Activated B cell treated with CpG ODN at 0.5 μM for 24 hours (primary cell): ENCODE measurements at regions of chr3 and their contacts with region 1.

Region 1: GRCh38 chr3:45593708-45594609 is 592 bp upstream of the LIMD1 start:
- DNase-seq: peak; percentile 80
- ATAC-seq: peak; percentile 69
- H3K4me3 Mint-ChIP-seq: peak overlapping the region; percentile 83
- H3K27ac Mint-ChIP-seq: peak overlapping the region; percentile 92
- H3K4me1 Mint-ChIP-seq: peaks cover 58% of the 10 kb centered on the region
- H3K27me3 Mint-ChIP-seq: no peaks in the 10 kb centered on the region
- CTCF ChIP-seq: no peak

Region 2: DNA sequence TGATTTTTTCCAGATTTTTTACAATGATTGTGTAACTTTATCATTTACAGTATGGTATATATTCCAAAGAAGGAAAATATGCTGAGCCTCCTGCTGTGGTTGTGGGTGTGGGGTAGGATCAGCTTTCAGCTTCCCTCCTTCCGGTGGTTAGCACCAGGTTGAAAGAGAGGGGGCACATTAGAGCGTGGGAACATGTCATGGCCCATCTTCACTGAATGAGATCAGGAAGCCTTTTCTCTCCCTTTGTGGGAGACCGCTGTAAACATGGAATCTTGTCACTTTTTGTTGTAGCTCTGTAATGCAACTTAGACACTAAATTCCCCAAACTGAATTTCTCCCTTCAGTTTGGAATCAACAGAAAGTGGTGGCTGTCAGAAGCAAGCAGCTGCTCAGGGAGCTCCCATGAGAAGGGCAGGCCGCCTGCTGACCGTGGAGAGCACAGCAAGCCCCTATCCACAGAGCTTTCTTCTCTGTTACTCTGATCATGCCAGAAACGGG is 86.1 kb before region 1 on chr3:
- CTCF ChIA-PET with region 1: interaction called, 4 read pairs
- POLR2A ChIA-PET with region 1: no interaction called
- intact Hi-C with region 1: loop called (anchors 2 kb)
- DNase-seq: no peak
- ATAC-seq: no peak
- H3K4me3 Mint-ChIP-seq: no peak overlapping the region
- H3K27ac Mint-ChIP-seq: no peak overlapping the region
- H3K4me1 Mint-ChIP-seq: no peaks in the 10 kb centered on the region
- H3K27me3 Mint-ChIP-seq: no peaks in the 10 kb centered on the region
- CTCF ChIP-seq: no peak

Region 3: GRCh38 chr3:45528429-45528828 is 65.5 kb before region 1 on chr3:
- CTCF ChIA-PET with region 1: no interaction called
- POLR2A ChIA-PET with region 1: no interaction called
- intact Hi-C with region 1: no loop called
- DNase-seq: no peak
- ATAC-seq: no peak
- H3K4me3 Mint-ChIP-seq: no peak overlapping the region
- H3K27ac Mint-ChIP-seq: no peak overlapping the region
- H3K4me1 Mint-ChIP-seq: no peaks in the 10 kb centered on the region
- H3K27me3 Mint-ChIP-seq: no peaks in the 10 kb centered on the region
- CTCF ChIP-seq: no peak

Region 4: GRCh38 chr3:45612918-45613602 is 19.1 kb after region 1 on chr3:
- CTCF ChIA-PET with region 1: interaction called, 4 read pairs
- POLR2A ChIA-PET with region 1: interaction called, 21 read pairs
- intact Hi-C with region 1: loop called (anchors 1 kb)
- DNase-seq: no peak
- ATAC-seq: peak; percentile 76
- H3K4me3 Mint-ChIP-seq: peak overlapping the region; percentile 70
- H3K27ac Mint-ChIP-seq: peak overlapping the region; percentile 68
- H3K4me1 Mint-ChIP-seq: peaks cover 86% of the 10 kb centered on the region
- H3K27me3 Mint-ChIP-seq: no peaks in the 10 kb centered on the region
- CTCF ChIP-seq: no peak

Region 5: DNA sequence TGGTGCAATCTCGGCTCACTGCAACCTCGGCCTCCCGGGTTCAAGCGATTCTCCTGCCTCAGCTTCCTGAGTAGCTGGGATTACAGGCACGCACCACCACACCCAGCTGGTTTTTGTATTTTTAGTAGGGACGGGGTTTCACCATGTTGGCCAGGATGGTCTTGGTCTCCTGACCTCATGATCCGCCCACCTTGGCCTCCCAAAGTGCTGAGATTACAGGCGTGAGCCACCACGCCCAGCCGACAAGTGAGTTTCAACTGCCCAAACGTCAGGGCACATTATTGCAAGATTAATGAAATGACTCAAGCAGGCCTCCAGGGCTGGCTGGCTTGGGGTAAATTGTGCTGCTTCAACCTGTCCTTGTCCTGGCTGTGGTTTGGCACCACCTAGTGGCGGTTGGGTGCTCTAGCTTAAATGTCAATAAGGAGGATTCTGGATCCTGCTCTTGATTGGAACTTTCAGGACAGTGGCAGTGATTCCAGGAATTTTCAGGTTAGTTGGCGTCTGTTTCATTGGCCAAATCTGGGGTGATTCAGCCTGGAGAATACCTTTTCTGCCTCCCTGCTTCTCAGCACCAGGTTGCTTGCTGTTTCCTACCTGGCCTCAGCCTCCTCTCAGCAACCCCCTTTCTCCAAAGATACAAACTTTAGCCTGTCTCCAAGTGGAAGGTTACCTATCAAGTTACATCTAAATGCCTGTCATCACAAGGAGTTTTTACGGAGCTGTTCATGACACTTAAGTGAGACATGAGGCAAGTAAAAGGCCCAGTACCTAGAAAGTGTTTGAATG is 62.8 kb after region 1 on chr3:
- CTCF ChIA-PET with region 1: interaction called, 28 read pairs
- POLR2A ChIA-PET with region 1: interaction called, 26 read pairs
- intact Hi-C with region 1: loop called (anchors 1 kb)
- DNase-seq: peak; percentile 71
- ATAC-seq: peak; percentile 92
- H3K4me3 Mint-ChIP-seq: no peak overlapping the region
- H3K27ac Mint-ChIP-seq: peak overlapping the region; percentile 78
- H3K4me1 Mint-ChIP-seq: peaks cover 49% of the 10 kb centered on the region
- H3K27me3 Mint-ChIP-seq: no peaks in the 10 kb centered on the region
- CTCF ChIP-seq: no peak

Region 6: GRCh38 chr3:45995236-45996192 is 401.6 kb after region 1 on chr3 and contains the start of gene FYCO1:
- CTCF ChIA-PET with region 1: no interaction called
- POLR2A ChIA-PET with region 1: no interaction called
- intact Hi-C with region 1: loop called (anchors 10 kb)
- DNase-seq: peak; percentile 82
- ATAC-seq: peak; percentile 97
- H3K4me3 Mint-ChIP-seq: peak within 1 kb of the TSS; percentile 89
- H3K27ac Mint-ChIP-seq: peak within 1 kb of the TSS; percentile 89
- H3K4me1 Mint-ChIP-seq: peaks cover 41% of the 10 kb centered on the region
- H3K27me3 Mint-ChIP-seq: no peaks in the 10 kb centered on the region
- CTCF ChIP-seq: no peak
- total RNA-seq, gene FYCO1: 10.6 and 14.9 TPM in 2 replicates